Activated CD4-positive, alpha-beta T cell treated with anti-CD3 and anti-CD28 coated beads, Interleukin-2, amount 10 ng/mL, durations not matched to agents 7 days and 5 days (primary cell): ENCODE measurements at regions of chr12 and their contacts with region 1.

Region 1: GRCh38 chr12:51320695-51321320 is 3.2 kb downstream of the BIN2 start:
- DNase-seq: peak; percentile 24
- H3K4me3 Mint-ChIP-seq: peak overlapping the region; percentile 93
- H3K27ac Mint-ChIP-seq: peak overlapping the region; percentile 94
- H3K4me1 Mint-ChIP-seq: peaks cover 73% of the 10 kb centered on the region
- H3K27me3 Mint-ChIP-seq: no peaks in the 10 kb centered on the region

Region 2: DNA sequence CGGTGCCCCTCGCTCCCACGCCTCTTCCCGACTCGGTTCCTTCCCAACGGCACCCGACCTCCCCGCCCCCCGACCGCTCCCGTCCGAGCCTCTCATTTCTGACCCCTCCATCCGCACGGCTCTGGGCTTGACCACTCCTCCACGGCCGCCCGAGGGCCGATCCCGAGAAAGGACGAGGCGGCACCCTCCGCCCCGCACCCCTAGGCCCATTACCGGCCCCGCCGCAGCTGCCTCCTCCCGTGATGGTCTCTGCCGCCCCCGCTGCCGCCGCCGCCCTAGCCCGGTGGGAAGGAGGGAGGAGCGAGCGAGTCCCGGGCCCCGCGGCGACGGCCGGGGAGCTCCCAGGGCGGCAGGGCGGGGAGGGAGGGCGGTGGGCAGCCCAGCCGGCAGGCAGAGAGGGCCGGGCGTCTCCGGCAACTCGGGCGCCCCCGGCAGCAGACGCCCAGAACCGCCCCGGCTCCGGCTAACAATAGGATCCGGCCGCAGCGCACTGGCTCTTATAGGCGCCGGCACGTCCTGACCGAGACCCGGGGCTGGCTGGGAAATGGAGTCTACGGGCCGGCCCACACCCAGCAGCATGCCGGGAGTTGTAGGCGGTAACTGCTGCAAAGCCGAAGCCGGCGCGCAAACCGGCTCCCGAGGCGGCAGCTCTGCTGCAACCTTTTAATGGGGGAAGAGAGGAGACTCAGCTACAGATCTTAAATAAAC is 237.5 kb before region 1 on chr12 and contains the start of gene CSRNP2:
- CTCF ChIA-PET with region 1: no interaction called
- POLR2A ChIA-PET with region 1: interaction called, 10 read pairs
- DNase-seq: peak; percentile 95
- H3K4me3 Mint-ChIP-seq: peak within 1 kb of the TSS; percentile 85
- H3K27ac Mint-ChIP-seq: peak within 1 kb of the TSS; percentile 87
- H3K4me1 Mint-ChIP-seq: peaks cover 34% of the 10 kb centered on the region
- H3K27me3 Mint-ChIP-seq: no peaks in the 10 kb centered on the region
- total RNA-seq, gene CSRNP2: 13.6 to 17.0 TPM